ENCODE measurements at regions of chr16 and their contacts with region 1.

Region 1: DNA sequence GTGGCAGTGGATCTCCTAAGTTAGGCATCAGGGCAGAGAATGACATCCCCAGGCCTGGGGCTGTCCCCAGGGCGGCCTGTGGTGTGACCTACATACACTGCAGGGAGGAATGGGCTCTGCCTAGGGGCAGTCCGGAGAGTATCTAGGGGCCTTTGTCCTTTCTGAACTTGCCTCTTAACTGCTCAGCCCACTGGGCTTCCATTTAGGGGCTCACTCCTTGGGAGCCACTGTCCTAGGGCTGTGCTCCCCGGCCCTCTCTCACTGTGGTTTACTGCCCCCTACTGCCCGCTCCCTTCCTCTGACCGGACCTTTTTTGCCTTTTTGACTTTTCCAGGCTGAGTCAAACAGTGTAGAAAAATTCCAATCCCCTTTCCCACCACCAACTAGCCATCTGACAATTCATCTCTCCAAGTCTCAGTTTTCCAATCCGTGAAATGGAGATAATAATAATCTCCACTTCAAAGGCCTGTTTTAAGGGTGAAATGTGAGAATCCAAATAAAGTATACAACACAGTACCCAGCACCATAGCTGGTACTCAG is 66.8 kb downstream of the DNAH3 start:
- DNase-seq: peak; percentile 73
- ATAC-seq: peak; percentile 97

Region 2: DNA sequence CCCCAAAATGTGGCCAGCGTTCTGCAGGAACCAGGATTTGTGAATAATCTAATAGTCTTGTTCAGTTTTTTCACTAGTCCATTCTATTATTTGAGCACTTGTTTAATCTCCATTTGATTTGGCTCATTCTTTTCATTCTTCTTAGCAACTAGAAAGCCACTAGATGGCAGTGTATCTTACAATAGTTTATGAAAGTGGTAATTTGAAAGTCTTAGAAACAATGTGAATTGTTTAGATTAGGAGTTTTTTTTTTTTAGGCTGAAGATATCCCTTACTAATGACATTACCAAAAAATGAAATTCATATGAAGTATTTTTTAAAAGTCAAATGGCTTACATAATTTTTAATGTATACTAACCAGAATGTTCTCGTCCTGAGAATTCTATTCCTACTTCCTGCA is 284.2 kb before region 1 on chr16:
- intact Hi-C with region 1: loop called (anchors 5 kb)
- DNase-seq: no peak
- ATAC-seq: no peak

Region 3: GRCh38 chr16:20944861-20945574 is 138.8 kb before region 1 on chr16:
- intact Hi-C with region 1: loop called (anchors 10 kb)
- DNase-seq: no peak
- ATAC-seq: peak; percentile 55